ENCODE measurements at regions of chr2 and their contacts with region 1.

Region 1: DNA sequence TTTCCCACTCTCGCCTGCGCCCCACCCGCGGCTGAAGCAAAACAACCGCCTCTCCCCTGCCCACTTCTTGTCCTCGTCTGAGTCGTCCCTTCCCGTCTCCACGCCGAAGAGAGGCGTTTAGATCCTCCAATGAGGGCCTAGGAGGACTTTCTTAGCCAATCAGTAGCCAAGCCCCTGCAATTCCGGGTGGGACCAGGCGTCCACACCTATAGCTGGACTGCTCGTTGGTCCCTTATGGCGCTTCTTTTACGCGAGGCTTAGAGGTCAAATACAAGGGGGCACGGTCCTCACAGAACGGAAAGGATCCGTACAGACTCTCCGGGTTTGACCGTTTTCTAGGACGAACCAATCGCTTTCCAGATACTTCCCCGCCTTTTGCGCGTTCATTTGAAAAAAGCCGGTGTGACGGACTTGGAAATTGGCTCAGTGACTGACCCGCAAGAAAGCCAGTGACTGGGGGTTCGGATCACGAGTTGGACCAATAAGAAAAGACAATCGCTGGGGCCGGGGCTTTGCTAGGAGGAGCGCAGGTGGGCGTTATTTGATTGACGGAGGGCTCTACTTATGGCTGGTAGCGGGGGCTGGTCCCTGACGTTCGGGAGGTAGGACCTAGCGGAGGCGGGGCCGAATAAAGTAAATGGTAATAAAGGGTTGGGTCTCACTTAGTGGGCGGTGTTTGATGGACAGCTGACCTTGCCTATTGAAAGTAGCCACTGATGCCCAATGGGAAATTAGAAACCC is 565 bp upstream of the PPM1B start:
- DNase-seq: peak; percentile 99
- H3K4me3 Mint-ChIP-seq: peak overlapping the region; percentile 90
- H3K27ac Mint-ChIP-seq: peak overlapping the region; percentile 96
- H3K4me1 Mint-ChIP-seq: peaks cover 25% of the 10 kb centered on the region
- H3K27me3 Mint-ChIP-seq: no peaks in the 10 kb centered on the region

Region 2: DNA sequence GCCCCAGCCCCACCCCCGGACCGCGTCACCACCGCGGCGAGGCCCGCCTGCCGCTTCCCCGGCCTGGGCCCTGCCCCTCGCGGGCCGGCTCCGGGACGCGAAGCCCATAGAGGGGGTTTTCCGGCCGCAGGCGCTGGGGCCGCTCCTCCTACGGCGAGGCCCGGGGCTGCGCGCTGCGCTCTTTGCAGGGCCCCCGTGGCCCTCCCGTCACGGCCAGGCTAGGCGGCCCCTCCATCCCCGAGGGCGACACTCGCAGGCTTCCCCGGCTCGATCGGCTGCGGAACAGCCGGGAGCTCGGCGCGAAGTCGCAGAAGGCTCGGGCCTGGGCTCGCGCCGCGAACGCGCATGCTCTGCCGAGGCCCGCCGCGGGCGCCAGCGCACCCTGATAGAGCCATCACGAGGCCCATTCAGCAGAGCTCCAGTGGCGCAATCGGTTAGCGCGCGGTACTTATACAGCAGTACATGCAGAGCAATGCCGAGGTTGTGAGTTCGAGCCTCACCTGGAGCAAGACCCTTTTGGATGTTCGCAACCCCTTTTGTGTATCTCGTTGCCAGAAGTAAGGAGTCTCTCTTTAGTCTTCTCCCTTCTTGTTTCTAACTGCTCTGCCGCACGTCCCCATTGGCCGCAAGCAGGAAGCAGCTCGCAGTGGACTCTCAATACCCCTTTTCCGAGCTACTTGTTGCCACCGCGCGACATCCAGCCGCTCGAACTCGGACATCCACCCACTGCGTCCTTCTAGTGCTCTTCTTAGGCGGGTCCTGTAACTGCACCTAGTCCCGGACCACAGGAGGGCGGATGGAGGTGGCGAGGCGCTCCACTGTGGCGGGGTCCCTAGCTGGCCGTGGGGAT is 1357.8 kb before region 1 on chr2:
- CTCF ChIA-PET with region 1: no interaction called
- intact Hi-C with region 1: loop called (anchors 1 kb)
- DNase-seq: peak; percentile 96
- H3K4me3 Mint-ChIP-seq: peak overlapping the region; percentile 88
- H3K27ac Mint-ChIP-seq: peak overlapping the region; percentile 93
- H3K4me1 Mint-ChIP-seq: peaks cover 11% of the 10 kb centered on the region
- H3K27me3 Mint-ChIP-seq: no peaks in the 10 kb centered on the region

Region 3: GRCh38 chr2:43773876-43774613 is 394.1 kb before region 1 on chr2 and contains the start of gene DYNC2LI1:
- CTCF ChIA-PET with region 1: no interaction called
- intact Hi-C with region 1: loop called (anchors 1 kb)
- DNase-seq: peak; percentile 90
- H3K4me3 Mint-ChIP-seq: peak within 1 kb of the TSS; percentile 91
- H3K27ac Mint-ChIP-seq: peak within 1 kb of the TSS; percentile 79
- H3K4me1 Mint-ChIP-seq: peaks cover 21% of the 10 kb centered on the region
- H3K27me3 Mint-ChIP-seq: no peaks in the 10 kb centered on the region
- total RNA-seq, gene DYNC2LI1: 8.0 to 8.9 TPM

Region 4: DNA sequence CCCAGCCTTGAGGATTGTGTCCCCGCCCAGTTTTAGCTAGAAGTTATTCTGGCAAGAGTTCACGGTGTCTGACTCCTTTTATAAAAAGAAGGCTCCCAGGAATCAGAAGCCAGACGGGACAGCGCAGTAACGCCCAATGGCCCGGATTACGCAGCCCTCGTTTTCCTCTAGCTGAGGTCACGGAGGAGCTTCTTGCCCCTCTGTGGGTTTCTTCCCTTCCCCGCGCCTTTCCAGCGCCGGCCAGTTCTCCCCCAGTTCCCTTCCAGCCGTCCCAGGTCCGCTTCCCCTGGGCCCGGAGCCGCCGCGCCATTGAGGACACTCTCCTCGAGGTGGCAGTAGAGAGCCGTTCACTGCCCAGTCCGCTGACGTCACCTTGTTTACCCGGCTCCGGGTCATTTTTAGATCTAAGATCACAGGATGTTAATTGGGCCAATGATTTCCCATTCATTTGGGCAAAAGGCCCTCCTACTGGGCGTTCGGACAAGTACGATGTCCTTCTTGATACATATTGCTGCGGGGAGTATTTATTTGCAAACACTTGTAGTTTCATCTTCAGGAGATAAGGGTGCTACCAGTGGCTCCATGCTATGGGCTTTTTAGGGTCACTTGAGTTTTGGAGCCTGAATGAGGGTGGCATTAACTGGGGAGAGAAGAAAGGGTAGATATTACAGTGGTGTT is 80.9 kb before region 1 on chr2:
- CTCF ChIA-PET with region 1: interaction called, 5 read pairs
- intact Hi-C with region 1: loop called (anchors 1 kb)
- DNase-seq: peak; percentile 91
- H3K4me3 Mint-ChIP-seq: peak overlapping the region; percentile 66
- H3K27ac Mint-ChIP-seq: peak overlapping the region; percentile 54
- H3K4me1 Mint-ChIP-seq: peaks cover 13% of the 10 kb centered on the region
- H3K27me3 Mint-ChIP-seq: no peaks in the 10 kb centered on the region

Region 5: DNA sequence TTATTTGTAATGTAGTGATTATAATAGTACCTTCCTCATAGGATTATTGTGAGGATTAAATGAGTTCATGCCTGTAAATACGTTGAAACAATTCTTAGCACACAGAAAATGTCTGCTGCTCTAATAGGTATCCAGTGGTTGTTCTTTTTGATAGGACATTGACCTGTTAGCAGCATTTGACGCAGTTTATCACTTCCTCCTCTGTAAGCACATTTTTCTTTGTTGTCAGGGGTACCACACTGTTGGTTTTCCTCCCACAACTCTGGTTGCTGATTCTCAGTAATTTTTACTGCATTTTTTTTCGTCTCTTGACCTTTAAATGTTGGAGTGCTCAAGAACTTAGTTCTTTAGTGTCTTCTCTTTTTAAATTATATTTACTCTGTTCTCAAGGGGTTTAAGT is 16.0 kb after region 1 on chr2:
- CTCF ChIA-PET with region 1: no interaction called
- intact Hi-C with region 1: loop called (anchors 2 kb)
- DNase-seq: no peak
- H3K4me3 Mint-ChIP-seq: no peak overlapping the region
- H3K27ac Mint-ChIP-seq: no peak overlapping the region
- H3K4me1 Mint-ChIP-seq: peaks cover 73% of the 10 kb centered on the region
- H3K27me3 Mint-ChIP-seq: no peaks in the 10 kb centered on the region

Region 6: GRCh38 chr2:44244129-44244871 is 76.2 kb after region 1 on chr2:
- CTCF ChIA-PET with region 1: interaction called, 3 read pairs
- intact Hi-C with region 1: loop called (anchors 2 kb)
- DNase-seq: peak; percentile 69
- H3K4me3 Mint-ChIP-seq: peak overlapping the region; percentile 71
- H3K27ac Mint-ChIP-seq: no peak overlapping the region
- H3K4me1 Mint-ChIP-seq: peaks cover 21% of the 10 kb centered on the region
- H3K27me3 Mint-ChIP-seq: no peaks in the 10 kb centered on the region

Region 7: DNA sequence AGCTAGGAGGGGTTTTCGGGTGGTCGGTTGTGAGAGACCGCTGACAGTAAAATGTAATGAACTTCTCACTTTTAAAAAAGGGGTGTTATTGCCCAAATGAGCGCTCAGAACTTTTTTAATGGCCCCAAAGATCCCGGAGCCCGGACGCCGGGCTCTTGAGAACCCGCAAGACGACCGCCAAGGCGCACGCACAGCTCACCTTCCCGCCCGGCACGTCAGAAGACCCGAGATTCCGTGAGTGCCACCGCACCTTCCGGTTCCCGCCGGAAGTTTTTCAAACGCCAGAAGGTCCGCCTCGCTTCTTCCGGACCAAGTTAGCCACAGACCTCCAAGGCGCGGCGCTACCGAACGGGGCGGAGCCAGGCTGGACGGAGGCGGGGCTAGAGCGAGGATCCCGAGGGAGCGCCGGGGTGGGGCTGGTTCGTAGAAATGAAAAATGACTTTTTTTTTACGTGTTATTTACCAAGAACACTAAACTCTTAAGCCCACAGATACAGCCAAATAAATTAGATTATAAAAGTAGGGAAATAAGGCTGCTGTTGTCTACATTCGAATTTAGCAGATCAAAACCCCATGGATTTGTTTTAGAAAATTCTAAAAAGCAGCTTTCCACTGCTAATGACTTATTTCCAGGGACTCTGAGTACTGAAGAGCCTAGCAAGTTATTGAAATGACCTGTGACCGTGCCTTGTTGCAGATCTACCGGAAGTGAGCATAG is 1443.1 kb after region 1 on chr2 and contains the start of gene SRBD1:
- CTCF ChIA-PET with region 1: no interaction called
- intact Hi-C with region 1: loop called (anchors 5 kb)
- DNase-seq: peak; percentile 96
- H3K4me3 Mint-ChIP-seq: peak within 1 kb of the TSS; percentile 98
- H3K27ac Mint-ChIP-seq: peak within 1 kb of the TSS; percentile 98
- H3K4me1 Mint-ChIP-seq: peaks cover 19% of the 10 kb centered on the region
- H3K27me3 Mint-ChIP-seq: no peaks in the 10 kb centered on the region
- total RNA-seq, gene SRBD1: 21.3 to 22.6 TPM

Measured in activated naive CD4-positive, alpha-beta T cell treated with anti-CD3 and anti-CD28 coated beads for 36 hours (primary cell).